ENCODE measurements at regions of chr7 and their contacts with region 1.

Region 1: GRCh38 chr7:77600952-77601351 is 63.9 kb downstream of the PTPN12 start:
- DNase-seq: no peak

Region 2: GRCh38 chr7:77619314-77619713 is 18.4 kb after region 1 on chr7:
- intact Hi-C with region 1: loop called in 1 of 2 experiments (anchors 2 kb)
- DNase-seq: no peak

Region 3: DNA sequence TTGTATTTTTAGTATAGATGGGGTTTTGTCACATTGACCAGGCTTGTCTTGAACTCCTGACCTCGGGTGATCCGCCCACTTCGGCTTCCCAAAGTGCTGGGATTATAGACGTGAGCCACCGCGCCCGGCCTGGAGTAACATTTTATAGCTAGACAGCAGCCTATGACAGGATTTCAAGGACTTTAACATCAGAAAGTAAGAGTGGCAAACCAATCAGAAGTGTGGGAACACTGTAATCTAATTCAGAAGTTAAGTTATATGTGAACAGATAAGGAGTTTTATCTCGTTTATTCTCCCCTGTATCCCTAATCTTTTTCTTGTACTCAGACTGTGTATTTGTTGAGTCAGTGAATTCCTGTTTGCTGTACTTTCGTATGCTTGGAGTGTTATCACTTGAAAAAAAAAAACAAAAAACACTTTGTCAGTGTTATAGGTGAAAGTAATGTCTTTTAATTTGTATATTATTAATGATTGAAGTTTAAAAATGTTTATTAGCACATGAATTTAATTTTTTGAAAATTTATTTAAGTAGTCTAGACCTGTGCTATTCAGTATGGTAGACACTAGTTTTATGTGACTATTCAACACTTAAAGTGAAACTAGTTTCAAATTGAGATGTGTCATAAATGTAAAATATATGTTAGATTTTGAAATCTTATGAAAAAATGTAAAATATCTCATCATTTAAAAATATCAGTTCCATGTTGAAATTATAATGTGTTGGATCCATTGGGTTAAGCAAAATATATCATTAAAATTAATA is 133.9 kb after region 1 on chr7:
- intact Hi-C with region 1: no loop called
- DNase-seq: no peak

Region 4: DNA sequence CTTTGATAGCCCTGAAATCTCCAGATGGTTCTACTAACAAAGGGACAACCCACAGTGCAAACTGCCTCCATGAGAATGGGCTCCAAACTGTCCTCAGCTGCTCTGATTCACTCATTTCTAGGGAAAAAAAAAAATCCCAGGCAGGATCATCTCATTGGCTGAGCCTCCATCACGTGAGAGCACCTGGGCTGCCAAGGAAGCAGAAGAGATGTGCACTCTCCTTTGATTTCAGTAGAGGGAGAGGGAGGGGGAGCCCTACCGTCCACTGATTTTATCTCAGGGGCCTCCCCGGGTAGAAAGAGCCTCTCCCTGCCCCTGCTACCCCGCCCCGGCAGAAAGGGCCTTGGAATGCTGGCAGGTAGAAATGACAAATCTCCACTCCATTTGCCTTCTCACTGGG is 923.0 kb after region 1 on chr7:
- intact Hi-C with region 1: no loop called
- DNase-seq: no peak